ENCODE measurements at regions of chr3 and their contacts with region 1.

Region 1: DNA sequence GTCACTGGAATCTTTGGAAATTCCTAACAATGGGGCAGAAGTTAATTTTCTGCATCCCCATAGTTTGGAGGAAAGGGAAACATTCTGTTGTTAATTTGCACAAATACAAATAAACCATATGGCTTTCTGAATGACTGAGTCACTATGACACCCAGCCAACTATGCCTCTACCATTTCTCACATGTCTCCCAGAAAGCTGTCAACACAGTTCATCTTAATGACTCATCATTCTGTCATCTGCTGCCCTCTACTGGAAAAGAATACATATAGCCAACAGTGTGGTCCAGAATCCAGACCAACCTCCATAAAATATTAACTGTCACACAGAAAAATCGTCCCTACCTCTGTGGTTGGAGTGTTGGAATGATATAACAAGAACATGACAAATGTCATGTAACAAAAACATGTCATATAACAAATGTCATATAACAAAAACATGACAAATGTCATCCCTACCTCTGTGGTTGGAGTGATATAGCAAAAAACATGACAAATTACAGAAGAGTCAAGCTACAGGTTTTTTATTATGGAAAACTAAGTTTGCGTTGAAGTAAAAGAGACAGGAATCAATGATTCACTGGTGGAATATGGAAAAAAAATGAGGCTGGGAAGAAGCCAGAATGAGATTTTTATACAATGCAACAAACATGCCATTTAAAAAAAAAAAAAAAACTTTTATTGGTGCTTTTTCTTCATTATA is 47.7 kb upstream of the GYG1 start:
- DNase-seq: peak; percentile 23
- H3K4me3 ChIP-seq: no peak overlapping the region
- H3K27ac ChIP-seq: no peak overlapping the region
- H3K4me1 ChIP-seq: no peaks in the 10 kb centered on the region
- H3K27me3 ChIP-seq: no peaks in the 10 kb centered on the region
- CTCF ChIP-seq: peak; percentile 60

Region 2: DNA sequence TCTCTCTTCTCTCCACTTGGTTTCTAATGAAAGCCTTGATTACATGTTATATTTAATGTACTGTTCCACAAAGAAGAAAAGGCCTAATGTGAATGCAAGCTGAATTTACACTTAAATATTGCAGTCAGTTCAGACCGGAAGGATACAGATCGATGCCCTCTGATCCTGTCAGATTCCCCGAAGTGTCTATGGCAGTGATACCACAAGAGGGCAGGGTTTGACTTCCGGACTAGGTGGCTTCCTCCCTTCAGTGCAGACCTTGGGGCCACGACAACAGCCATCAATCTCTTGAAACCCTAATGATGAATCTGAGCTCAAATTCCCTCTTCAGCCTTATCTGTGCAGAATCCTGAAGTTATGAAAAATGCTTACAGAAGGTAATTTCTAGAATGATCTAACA is 216.4 kb before region 1 on chr3:
- intact Hi-C with region 1: loop called (anchors 5 kb)
- DNase-seq: peak; percentile 23
- H3K4me3 ChIP-seq: no peak overlapping the region
- H3K27ac ChIP-seq: no peak overlapping the region
- H3K4me1 ChIP-seq: no peaks in the 10 kb centered on the region
- H3K27me3 ChIP-seq: no peaks in the 10 kb centered on the region
- CTCF ChIP-seq: no peak

Region 3: DNA sequence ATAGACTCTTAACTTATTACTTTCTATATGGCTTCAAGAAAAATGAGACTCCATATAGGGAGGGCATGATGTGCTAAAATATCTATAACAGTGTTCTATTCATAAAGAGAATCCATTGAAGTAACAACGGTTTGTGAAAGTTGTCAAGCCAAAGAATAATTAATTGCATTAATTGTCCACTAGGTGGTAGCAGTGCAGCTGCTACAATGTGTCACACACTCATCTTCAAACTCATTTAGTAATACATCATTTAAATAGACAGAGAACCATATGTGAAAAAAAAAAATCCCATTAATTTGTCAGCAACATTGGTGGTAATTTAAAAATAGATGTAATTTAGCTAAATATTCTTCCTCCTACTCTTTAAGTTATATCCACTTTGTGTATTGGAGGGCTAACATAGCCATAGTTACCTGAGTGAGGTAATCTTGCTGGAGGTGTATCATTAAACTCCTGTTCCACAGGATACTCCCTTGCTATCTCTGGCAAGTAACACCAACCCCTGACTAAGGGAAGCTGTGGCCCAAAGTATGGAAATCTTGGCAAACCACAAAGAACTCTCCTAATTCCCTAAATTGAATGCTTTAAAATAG is 82.3 kb before region 1 on chr3:
- intact Hi-C with region 1: loop called (anchors 2 kb)
- DNase-seq: no peak
- H3K4me3 ChIP-seq: no peak overlapping the region
- H3K27ac ChIP-seq: no peak overlapping the region
- H3K4me1 ChIP-seq: no peaks in the 10 kb centered on the region
- H3K27me3 ChIP-seq: no peaks in the 10 kb centered on the region
- CTCF ChIP-seq: peak; percentile 69